ENCODE measurements at regions of chr16 and their contacts with region 1.

Region 1: GRCh38 chr16:72066747-72067146 is 3.7 kb downstream of the HPR start:
- DNase-seq: peak; percentile 64
- H3K4me3 Mint-ChIP-seq: no peak overlapping the region
- H3K27ac Mint-ChIP-seq: no peak overlapping the region
- H3K4me1 Mint-ChIP-seq: no peaks in the 10 kb centered on the region
- H3K27me3 Mint-ChIP-seq: no peaks in the 10 kb centered on the region

Region 2: DNA sequence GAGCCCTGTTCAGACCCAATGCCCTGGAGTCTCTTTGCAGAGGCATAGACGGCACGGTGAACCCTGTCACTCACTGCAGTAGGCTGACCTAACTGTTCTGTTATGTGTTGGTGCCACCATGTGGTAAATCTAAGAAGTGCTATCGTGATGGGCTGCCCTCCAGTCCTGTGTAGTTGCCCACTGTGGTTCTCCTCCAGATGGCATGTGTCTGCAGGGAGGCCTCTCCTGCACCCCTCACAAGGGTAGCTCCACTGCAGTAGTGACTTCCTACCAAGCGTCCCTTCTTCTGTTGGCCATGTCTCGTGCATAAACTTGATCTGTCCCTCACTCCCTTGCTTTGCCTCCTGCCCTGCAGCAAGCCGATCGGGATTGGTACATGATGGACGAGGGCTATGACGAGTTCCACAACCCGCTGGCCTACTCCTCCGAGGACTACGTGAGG is 32.7 kb after region 1 on chr16:
- intact Hi-C with region 1: loop called (anchors 1 kb)
- DNase-seq: peak; percentile 87
- H3K4me3 Mint-ChIP-seq: no peak overlapping the region
- H3K27ac Mint-ChIP-seq: no peak overlapping the region
- H3K4me1 Mint-ChIP-seq: peaks cover 20% of the 10 kb centered on the region
- H3K27me3 Mint-ChIP-seq: no peaks in the 10 kb centered on the region